ENCODE measurements at regions of chr5 and their contacts with region 1.

Region 1: DNA sequence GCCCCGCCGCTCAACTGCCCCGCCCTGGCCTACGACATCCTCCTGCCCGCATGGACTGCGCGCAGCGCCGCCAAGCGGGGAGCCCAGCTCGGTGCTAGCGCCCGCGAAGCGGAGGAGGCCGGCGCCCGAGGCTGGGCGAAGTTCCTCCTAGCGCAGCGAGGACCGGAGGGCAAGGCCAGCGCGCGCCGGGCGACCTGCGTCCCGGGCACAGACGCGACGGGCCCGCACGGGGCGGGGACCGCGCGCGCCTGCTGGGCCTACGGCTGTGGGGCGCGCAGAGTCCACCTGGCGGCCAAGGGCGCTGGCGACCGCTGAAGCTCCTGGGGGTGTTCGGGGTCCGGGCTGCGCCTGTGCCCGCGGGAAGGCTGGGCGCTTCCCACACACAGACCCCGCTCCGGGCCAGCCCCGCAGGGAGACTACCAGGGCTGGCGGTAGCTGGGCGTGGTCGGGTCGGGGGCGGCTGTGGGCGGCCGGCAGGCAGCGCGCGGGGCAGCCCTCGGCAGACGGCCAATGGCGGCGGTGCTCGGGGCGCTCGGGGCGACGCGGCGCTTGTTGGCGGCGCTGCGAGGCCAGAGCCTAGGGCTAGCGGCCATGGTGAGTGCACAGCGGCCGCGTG is at the start of gene PCBD2:
- DNase-seq: peak; percentile 89 to 94 (median 92)
- H3K4me3 ChIP-seq: peak within 1 kb of the TSS; percentile 75 to 82 (median 76)
- H3K27ac ChIP-seq: peak within 1 kb of the TSS; percentile 57 to 99 (median 98)
- H3K4me1 ChIP-seq: peaks cover 0 to 3% of the 10 kb centered on the region in 2 donors
- H3K27me3 ChIP-seq: no peaks in the 10 kb centered on the region
- CTCF ChIP-seq: peak; percentile 67 to 97 (median 82)
- POLR2A ChIP-seq: peak; percentile 64 to 76
- total RNA-seq, gene PCBD2: 7.1 to 19.5 (median 15.0) TPM

Region 2: GRCh38 chr5:134749415-134749814 is 155.3 kb before region 1 on chr5:
- intact Hi-C with region 1: loop called in 1 of 2 experiments (anchors 10 kb)
- DNase-seq: no peak
- H3K4me3 ChIP-seq: no peak overlapping the region
- H3K27ac ChIP-seq: no peak overlapping the region
- H3K4me1 ChIP-seq: no peaks in the 10 kb centered on the region
- H3K27me3 ChIP-seq: no peaks in the 10 kb centered on the region
- CTCF ChIP-seq: no peak
- POLR2A ChIP-seq: no peak

Region 3: DNA sequence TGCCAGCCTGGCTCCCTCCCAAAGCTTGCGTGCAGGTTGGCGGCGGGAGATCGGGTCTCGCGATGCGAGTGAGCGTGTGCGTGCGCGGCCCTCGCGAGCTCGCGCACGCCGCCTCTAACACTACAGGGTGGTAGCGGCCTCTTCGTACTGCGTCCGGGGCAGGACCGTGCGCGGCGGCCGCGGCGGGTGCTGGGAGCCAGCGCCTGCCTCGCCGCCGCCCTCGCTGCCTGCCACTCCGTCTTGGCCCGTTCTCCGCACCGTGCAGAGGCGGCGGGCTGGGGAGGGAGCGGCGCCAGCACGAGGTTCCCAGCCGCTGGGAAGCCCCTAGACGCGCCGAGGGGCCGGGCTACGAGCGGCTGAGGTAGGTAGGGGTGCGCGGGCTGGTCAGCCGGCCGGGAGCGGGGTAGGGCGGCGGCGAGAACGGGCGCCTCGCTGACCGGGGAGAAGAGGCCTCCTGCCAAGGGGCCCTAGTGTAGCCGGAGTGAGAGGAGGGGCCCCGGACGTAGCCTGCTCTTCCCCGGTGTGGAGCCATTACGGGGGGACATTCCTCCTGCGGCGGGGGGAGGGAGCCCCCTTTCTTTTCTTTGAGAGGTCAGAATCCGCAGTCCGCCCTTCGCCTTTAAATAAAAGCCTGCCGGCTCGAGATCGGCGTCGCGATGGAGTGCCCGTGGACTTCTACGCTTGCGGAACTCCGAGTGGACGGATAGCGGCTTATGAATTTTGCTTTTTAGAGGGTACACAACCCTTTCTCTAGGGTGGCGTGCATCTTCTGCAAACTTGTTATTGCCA is 58.7 kb before region 1 on chr5 and contains the start of gene C5orf24:
- intact Hi-C with region 1: loop called in 1 of 2 experiments (anchors 10 kb)
- DNase-seq: peak; percentile 95 to 98 (median 97)
- H3K4me3 ChIP-seq: peak within 1 kb of the TSS; percentile 22 to 74 (median 70)
- H3K27ac ChIP-seq: peak within 1 kb of the TSS; percentile 95 to 98 (median 96)
- H3K4me1 ChIP-seq: peaks cover 18 to 43% of the 10 kb centered on the region in 2 donors
- H3K27me3 ChIP-seq: no peaks in the 10 kb centered on the region
- CTCF ChIP-seq: peak in 1 of 6 experiments; percentile 8
- POLR2A ChIP-seq: peak; percentile 98 to 99
- total RNA-seq, gene C5orf24: 28.1 to 68.2 (median 43.5) TPM

Region 4: DNA sequence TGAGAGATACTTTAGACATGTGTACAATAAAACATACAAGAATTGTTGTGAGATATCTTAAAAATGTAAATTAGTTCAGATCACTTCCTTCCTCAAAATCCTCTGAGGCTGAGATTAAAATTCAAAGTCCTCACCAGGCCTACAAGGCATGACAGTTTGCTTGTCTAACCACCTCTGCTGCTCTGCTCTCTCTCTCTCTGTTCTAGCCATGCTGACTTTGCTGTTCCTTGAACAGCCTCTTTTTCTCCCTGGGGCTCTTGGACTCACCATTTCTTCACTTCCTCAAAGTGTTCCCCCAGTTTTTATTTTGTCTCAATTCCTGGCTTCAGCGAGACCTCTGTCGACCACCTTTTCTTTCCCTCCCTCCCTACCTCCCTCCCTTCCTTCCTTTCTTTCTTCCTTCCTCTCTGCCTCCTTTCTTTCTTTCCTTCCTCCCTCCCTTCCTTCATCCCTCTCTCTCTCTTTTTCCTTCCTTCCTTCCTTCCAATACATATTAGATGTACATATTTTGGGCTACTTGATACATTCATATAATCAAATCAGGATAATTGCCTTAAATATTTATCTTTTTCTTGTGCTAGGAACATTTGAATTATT is 89.9 kb after region 1 on chr5:
- intact Hi-C with region 1: no loop called
- DNase-seq: no peak
- H3K4me3 ChIP-seq: no peak overlapping the region
- H3K27ac ChIP-seq: no peak overlapping the region
- H3K4me1 ChIP-seq: no peaks in the 10 kb centered on the region
- H3K27me3 ChIP-seq: no peaks in the 10 kb centered on the region
- CTCF ChIP-seq: no peak
- POLR2A ChIP-seq: no peak

Region 5: GRCh38 chr5:135034236-135034962 is 129.7 kb after region 1 on chr5:
- intact Hi-C with region 1: no loop called
- DNase-seq: peak in 6 of 7 donors; percentile 29 to 70 (median 52)
- H3K4me3 ChIP-seq: peak overlapping the region in 1 of 4 donors; percentile 64
- H3K27ac ChIP-seq: no peak overlapping the region
- H3K4me1 ChIP-seq: peaks cover 27 to 43% of the 10 kb centered on the region in 2 donors
- H3K27me3 ChIP-seq: peaks cover 89% of the 10 kb centered on the region
- CTCF ChIP-seq: no peak
- POLR2A ChIP-seq: no peak